ENCODE measurements at regions of chr13 and their contacts with region 1.

Region 1: GRCh38 chr13:33723772-33724435 is 94.0 kb upstream of the RFC3 start:
- DNase-seq: peak; percentile 30 to 82
- ATAC-seq: peak; percentile 91 to 97
- H3K4me3 ChIP-seq: no peak overlapping the region
- H3K27ac ChIP-seq: peak overlapping the region in 1 of 2 experiments; percentile 26; a peak in 2 of 6 replicates
- H3K4me1 ChIP-seq: peaks cover 26% of the 10 kb centered on the region; the same call in 2 of the 3 replicates
- CTCF ChIP-seq: peak; percentile 74
- EP300 ChIP-seq: no peak
- POLR2A ChIP-seq: no peak
- RAD21 ChIP-seq: peak; percentile 91 to 95

Region 2: DNA sequence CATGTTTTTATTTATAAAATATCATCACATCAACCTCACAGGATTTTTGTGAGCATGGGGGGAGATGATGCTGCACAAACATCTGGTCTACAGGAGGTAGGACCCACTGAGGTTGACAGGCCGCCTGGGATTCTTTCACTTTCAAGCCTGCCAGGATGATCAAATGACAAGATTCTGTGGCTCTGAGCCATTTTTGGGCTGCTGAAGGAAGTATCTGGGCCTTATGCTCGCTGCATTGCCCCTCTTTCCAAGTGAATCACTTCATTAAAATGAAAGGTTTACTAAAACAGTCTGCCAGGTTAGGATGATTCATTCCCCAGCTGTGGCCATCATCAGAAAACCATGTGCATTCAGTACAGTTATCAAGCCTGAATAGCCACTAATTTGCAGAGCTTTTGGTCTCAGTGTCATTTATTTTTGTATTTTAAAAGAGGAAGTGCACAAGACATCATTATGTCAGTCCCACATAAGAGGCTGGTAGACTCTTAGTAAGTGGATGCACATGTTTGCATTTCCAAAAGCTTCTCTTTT is 472.7 kb before region 1 on chr13:
- CTCF ChIA-PET with region 1: no interaction called
- POLR2A ChIA-PET with region 1: no interaction called
- DNase-seq: no peak
- ATAC-seq: peak; percentile 72 to 76
- H3K4me3 ChIP-seq: no peak overlapping the region
- H3K27ac ChIP-seq: peak overlapping the region; percentile 39 to 51; a peak in 4 of 6 replicates
- H3K4me1 ChIP-seq: peaks cover 16% of the 10 kb centered on the region; the same call in 2 of the 3 replicates
- CTCF ChIP-seq: no peak
- EP300 ChIP-seq: no peak
- POLR2A ChIP-seq: no peak
- RAD21 ChIP-seq: no peak

Region 3: GRCh38 chr13:33542283-33543088 is 181.4 kb before region 1 on chr13:
- CTCF ChIA-PET with region 1: interaction called, 23 read pairs
- POLR2A ChIA-PET with region 1: interaction called, 3 read pairs
- DNase-seq: peak; percentile 73 to 97
- ATAC-seq: peak; percentile 99 to 100
- H3K4me3 ChIP-seq: peak overlapping the region; percentile 52
- H3K27ac ChIP-seq: peak overlapping the region; percentile 93
- H3K4me1 ChIP-seq: peaks cover 12% of the 10 kb centered on the region; the same call in 2 of the 3 replicates
- CTCF ChIP-seq: peak; percentile 71
- EP300 ChIP-seq: no peak
- POLR2A ChIP-seq: peak; percentile 30
- RAD21 ChIP-seq: peak; percentile 80 to 95

Region 4: DNA sequence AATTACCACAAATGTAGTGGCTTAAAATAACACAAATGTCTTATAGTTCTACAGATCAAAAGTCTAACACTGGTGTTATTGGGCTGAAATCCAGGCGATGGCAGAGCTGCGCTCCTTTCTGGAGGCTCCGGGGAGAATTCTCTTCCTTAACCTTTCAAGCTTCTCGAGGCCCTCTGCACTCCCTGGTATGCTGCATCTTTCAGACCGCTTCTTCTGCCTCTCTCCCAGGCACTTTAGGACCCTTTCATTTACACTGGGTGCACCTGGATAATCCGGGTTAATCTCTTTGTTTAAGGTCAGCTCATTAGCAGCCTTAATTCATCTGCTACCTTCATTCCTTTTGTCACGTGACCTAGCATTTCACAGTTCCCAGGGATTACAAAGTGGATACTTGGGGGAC is 117.2 kb before region 1 on chr13:
- CTCF ChIA-PET with region 1: interaction called, 26 read pairs
- POLR2A ChIA-PET with region 1: no interaction called
- DNase-seq: peak in 1 of 2 experiments; percentile 42
- ATAC-seq: peak; percentile 66 to 81; a peak in 4 of 6 replicates
- H3K4me3 ChIP-seq: no peak overlapping the region
- H3K27ac ChIP-seq: peak overlapping the region in 1 of 2 experiments; percentile 29; a peak in 1 of 6 replicates
- H3K4me1 ChIP-seq: no peaks in the 10 kb centered on the region
- CTCF ChIP-seq: peak; percentile 35
- EP300 ChIP-seq: no peak
- POLR2A ChIP-seq: no peak
- RAD21 ChIP-seq: peak; percentile 57 to 67

Region 5: DNA sequence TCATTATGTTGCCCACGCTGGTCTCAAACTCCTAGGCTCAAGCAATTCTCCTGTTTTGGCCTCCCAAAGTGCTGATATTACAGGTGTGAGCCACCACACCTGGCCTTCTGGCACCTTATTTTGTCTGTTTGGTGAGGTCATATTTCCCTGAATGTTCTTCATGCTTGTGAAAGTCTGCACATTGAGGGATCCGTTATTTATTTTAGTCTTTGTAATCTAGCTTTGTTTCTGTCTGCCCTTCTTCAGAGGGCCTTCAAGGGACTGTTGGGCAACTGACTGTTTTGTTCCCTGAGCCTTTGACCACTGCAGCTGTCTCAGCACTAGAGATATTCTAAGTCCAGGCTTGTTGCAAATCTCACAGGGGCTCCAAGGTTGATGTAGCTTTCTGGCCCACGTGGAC is 16.5 kb before region 1 on chr13:
- CTCF ChIA-PET with region 1: interaction called, 19 read pairs
- POLR2A ChIA-PET with region 1: no interaction called
- DNase-seq: no peak
- ATAC-seq: no peak
- H3K4me3 ChIP-seq: no peak overlapping the region
- H3K27ac ChIP-seq: no peak overlapping the region
- H3K4me1 ChIP-seq: no peaks in the 10 kb centered on the region
- CTCF ChIP-seq: no peak
- EP300 ChIP-seq: no peak
- POLR2A ChIP-seq: no peak
- RAD21 ChIP-seq: no peak

Measured in A549 (cell line).